ENCODE measurements at regions of chr5 and their contacts with region 1.

Region 1: DNA sequence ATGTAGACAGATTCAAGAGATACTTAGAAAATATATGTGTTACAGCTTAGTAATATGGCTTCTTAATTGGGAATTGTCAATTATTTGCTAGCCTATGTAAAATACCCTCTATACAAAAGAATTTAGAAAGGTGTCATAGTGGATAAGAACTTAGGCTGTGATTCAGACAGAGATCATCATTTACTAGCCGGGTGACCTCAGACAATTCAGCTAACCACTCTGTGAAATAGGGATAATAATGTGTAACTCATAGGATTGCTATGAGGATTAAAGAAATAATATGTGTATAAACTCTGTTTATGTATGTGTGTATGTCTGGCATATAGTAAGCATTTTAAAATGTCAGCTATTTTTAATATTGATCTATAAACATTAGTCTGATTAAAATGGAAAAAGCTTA is 5.9 kb upstream of the LARS1 start:
- DNase-seq: no peak
- H3K4me3 ChIP-seq: no peak overlapping the region
- H3K27ac ChIP-seq: no peak overlapping the region
- H3K4me1 ChIP-seq: peaks cover 0 to 2% (median 2%) of the 10 kb centered on the region in 4 donors
- H3K27me3 ChIP-seq: peaks cover 0 to 6% (median 0%) of the 10 kb centered on the region in 4 donors
- CTCF ChIP-seq: no peak
- EP300 ChIP-seq: no peak
- POLR2A ChIP-seq: no peak

Region 2: GRCh38 chr5:146203872-146204192 is 15.5 kb after region 1 on chr5:
- intact Hi-C with region 1: loop called (anchors 2 kb)
- DNase-seq: no peak
- H3K4me3 ChIP-seq: peak overlapping the region; percentile 83 to 99 (median 94)
- H3K27ac ChIP-seq: peak overlapping the region; percentile 81 to 90 (median 89)
- H3K4me1 ChIP-seq: peaks cover 19 to 53% (median 47%) of the 10 kb centered on the region in 4 donors
- H3K27me3 ChIP-seq: no peaks in the 10 kb centered on the region
- CTCF ChIP-seq: no peak
- EP300 ChIP-seq: no peak
- POLR2A ChIP-seq: no peak

Region 3: DNA sequence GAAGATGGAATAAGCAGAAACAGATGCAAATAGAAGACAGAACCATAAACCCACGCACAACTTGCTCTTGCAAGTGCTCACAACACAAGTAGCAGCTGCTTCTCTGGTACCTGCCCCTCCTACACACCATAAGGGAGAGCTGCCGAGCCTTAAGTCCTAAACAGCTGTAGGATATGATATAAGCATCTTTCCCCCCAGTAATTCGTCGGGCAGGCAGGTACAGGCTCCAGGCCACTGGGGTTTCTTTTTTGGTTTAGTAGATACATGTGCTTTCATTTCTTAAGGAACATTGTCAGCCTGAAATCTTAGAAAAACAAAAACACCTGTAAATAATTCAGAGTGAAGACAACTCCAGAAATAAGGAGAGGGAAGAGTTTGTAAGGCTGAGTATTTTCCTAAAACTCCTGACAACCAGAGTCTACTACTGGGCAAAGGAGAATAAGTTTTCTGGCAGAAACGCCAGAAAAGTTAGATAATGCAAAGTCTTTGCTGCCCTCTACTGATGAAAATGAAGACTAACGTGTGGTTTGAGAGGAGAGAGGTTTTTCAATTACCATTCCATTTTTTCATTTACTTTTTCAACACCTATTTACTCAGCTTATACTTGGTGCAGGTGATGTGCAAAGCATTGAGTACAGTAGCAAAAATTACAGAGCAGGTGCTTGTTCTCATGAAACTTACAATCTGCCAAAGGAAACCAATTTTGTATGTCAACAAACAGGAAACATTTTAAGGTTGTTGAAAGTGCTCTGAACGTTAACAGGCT is 238.7 kb after region 1 on chr5:
- intact Hi-C with region 1: loop called (anchors 10 kb)
- DNase-seq: no peak
- H3K4me3 ChIP-seq: no peak overlapping the region
- H3K27ac ChIP-seq: no peak overlapping the region
- H3K4me1 ChIP-seq: peaks cover 0 to 5% (median 2%) of the 10 kb centered on the region in 4 donors
- H3K27me3 ChIP-seq: peaks cover 0 to 20% (median 0%) of the 10 kb centered on the region in 4 donors
- CTCF ChIP-seq: peak; percentile 54 to 72 (median 62)
- EP300 ChIP-seq: no peak
- POLR2A ChIP-seq: no peak

Measured in esophagus muscularis mucosa (tissue), 4 donors.